Activated CD8-positive, alpha-beta T cell treated with anti-CD3 and anti-CD28 coated beads for 36 hours (primary cell): ENCODE measurements at regions of chr12 and their contacts with region 1.

Region 1: DNA sequence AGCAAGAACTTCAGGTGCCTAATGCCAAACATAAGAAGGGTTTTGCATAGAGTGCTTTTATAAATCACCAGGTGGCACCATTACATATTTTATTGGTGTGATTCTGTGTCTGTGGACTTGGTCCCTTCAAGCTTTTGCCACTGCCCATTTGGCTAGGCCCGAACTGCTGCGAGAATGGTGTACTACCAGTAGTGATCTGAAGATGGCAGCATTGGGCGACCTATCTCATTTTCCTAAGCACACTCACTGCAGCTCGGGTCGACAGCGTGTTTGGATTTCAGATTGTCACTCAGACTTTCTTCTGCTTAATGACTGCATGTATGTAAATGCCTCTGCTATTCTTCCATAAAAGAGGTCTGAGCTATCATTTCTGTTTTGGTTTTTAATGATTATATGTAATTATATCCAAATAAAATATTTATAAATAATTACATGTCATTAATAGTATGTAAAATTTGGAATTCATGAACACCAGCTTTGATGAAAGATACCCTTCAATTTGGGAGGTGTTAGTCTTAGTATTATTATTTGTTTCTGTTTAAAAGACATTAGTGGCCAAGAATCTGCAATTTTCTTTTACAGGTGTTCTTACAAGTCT is 78.5 kb downstream of the TPH2 start:
- DNase-seq: peak; percentile 73
- ATAC-seq: peak; percentile 91
- H3K4me3 Mint-ChIP-seq: no peak overlapping the region
- H3K27ac Mint-ChIP-seq: no peak overlapping the region
- H3K4me1 Mint-ChIP-seq: no peaks in the 10 kb centered on the region
- H3K27me3 Mint-ChIP-seq: peaks cover 7% of the 10 kb centered on the region
- CTCF ChIP-seq: peak; percentile 71

Region 2: GRCh38 chr12:72178871-72179270 is 161.7 kb after region 1 on chr12:
- CTCF ChIA-PET with region 1: no interaction called
- POLR2A ChIA-PET with region 1: no interaction called
- intact Hi-C with region 1: no loop called
- DNase-seq: no peak
- ATAC-seq: no peak
- H3K4me3 Mint-ChIP-seq: no peak overlapping the region
- H3K27ac Mint-ChIP-seq: no peak overlapping the region
- H3K4me1 Mint-ChIP-seq: no peaks in the 10 kb centered on the region
- H3K27me3 Mint-ChIP-seq: no peaks in the 10 kb centered on the region
- CTCF ChIP-seq: no peak

Region 3: GRCh38 chr12:72271451-72272090 is 254.4 kb after region 1 on chr12:
- CTCF ChIA-PET with region 1: no interaction called
- POLR2A ChIA-PET with region 1: no interaction called
- intact Hi-C with region 1: loop called (anchors 5 kb)
- DNase-seq: peak; percentile 2
- ATAC-seq: no peak
- H3K4me3 Mint-ChIP-seq: no peak overlapping the region
- H3K27ac Mint-ChIP-seq: no peak overlapping the region
- H3K4me1 Mint-ChIP-seq: peaks cover 4% of the 10 kb centered on the region
- H3K27me3 Mint-ChIP-seq: peaks cover 44% of the 10 kb centered on the region
- CTCF ChIP-seq: no peak